Activated CD4-positive, alpha-beta T cell treated with anti-CD3 and anti-CD28 coated beads for 36 hours (primary cell): ENCODE measurements at regions of chr6 and their contacts with region 1.

Region 1: GRCh38 chr6:149746147-149746946 is at the start of gene NUP43:
- DNase-seq: peak; percentile 96
- ATAC-seq: peak; percentile 67
- H3K4me3 Mint-ChIP-seq: peak within 1 kb of the TSS; percentile 98
- H3K27ac Mint-ChIP-seq: peak within 1 kb of the TSS; percentile 96
- H3K4me1 Mint-ChIP-seq: peaks cover 27% of the 10 kb centered on the region
- H3K27me3 Mint-ChIP-seq: no peaks in the 10 kb centered on the region
- total RNA-seq, gene NUP43: 80.5 to 89.4 TPM

Region 2: GRCh38 chr6:149545754-149546528 is 200.4 kb before region 1 on chr6 and contains the start of gene PPIL4:
- CTCF ChIA-PET with region 1: no interaction called
- POLR2A ChIA-PET with region 1: no interaction called
- intact Hi-C with region 1: loop called in 1 of 2 experiments (anchors 1 kb)
- DNase-seq: peak; percentile 98
- ATAC-seq: peak; percentile 85
- H3K4me3 Mint-ChIP-seq: peak within 1 kb of the TSS; percentile 97
- H3K27ac Mint-ChIP-seq: peak within 1 kb of the TSS; percentile 98
- H3K4me1 Mint-ChIP-seq: peaks cover 42% of the 10 kb centered on the region
- H3K27me3 Mint-ChIP-seq: no peaks in the 10 kb centered on the region
- total RNA-seq, gene PPIL4: 22.6 to 26.8 TPM

Region 3: GRCh38 chr6:149648148-149649145 is 97.9 kb before region 1 on chr6 and contains the start of gene KATNA1:
- CTCF ChIA-PET with region 1: interaction called, 3 read pairs
- POLR2A ChIA-PET with region 1: no interaction called
- intact Hi-C with region 1: loop called (anchors 1 to 2 kb)
- DNase-seq: peak; percentile 95
- ATAC-seq: peak; percentile 96
- H3K4me3 Mint-ChIP-seq: peak within 1 kb of the TSS; percentile 90
- H3K27ac Mint-ChIP-seq: peak within 1 kb of the TSS; percentile 87
- H3K4me1 Mint-ChIP-seq: peaks cover 20% of the 10 kb centered on the region
- H3K27me3 Mint-ChIP-seq: no peaks in the 10 kb centered on the region
- total RNA-seq, gene KATNA1: 18.1 to 21.6 TPM

Region 4: DNA sequence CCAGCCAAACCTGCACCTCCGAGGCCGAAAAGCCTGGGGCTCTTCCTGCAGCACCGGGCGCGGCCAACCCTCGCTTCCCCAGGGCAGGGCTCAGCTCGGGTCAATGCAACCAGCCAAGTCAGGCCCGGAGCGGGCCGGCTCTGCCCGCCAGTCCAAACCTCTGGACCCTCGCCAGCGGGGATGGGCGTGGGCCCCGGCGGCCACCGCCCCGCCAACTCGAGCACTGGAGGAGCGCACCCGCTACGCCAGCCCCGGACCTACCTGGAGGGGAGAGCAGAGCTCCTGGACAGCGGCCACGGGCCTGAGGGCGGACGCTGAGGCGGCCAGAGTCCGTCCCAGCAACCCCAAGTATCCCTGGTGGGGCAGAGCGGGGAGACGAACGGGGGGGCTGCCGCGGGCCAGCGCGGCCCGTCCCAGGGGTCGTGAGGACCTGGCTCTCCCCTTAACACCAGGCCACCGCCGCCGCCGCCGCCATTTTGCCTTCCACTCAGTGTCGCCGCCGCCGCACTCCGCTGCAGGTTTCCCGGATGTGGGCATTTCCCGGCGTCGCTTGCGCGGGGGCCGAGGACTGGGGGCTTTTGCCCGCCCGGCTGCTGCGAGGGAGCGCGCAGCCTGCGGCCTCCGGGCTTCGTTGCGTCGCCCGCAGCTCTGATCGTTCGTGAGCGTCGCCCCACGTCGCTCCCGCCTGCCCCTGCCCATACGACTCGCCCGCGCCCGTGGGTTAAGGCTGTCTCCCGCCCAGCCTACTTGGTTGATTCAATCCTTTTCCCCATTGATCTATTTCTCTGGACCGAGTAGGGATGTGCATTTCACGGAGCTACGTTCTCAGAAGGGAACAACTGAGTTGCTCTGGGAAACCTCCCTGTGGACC is 28.5 kb before region 1 on chr6 and contains the start of gene LATS1:
- CTCF ChIA-PET with region 1: interaction called, 12 read pairs
- POLR2A ChIA-PET with region 1: interaction called, 7 read pairs
- intact Hi-C with region 1: loop called (anchors 1 kb)
- DNase-seq: peak; percentile 97
- ATAC-seq: peak; percentile 93
- H3K4me3 Mint-ChIP-seq: peak within 1 kb of the TSS; percentile 88
- H3K27ac Mint-ChIP-seq: peak within 1 kb of the TSS; percentile 98
- H3K4me1 Mint-ChIP-seq: peaks cover 25% of the 10 kb centered on the region
- H3K27me3 Mint-ChIP-seq: no peaks in the 10 kb centered on the region
- total RNA-seq, gene LATS1: 21.2 to 23.5 TPM

Region 5: GRCh38 chr6:149723771-149724417 is 22.5 kb before region 1 on chr6:
- CTCF ChIA-PET with region 1: interaction called, 12 read pairs
- POLR2A ChIA-PET with region 1: interaction called, 4 read pairs
- intact Hi-C with region 1: no loop called
- DNase-seq: peak; percentile 61
- ATAC-seq: peak; percentile 99
- H3K4me3 Mint-ChIP-seq: no peak overlapping the region
- H3K27ac Mint-ChIP-seq: peak overlapping the region; percentile 22
- H3K4me1 Mint-ChIP-seq: peaks cover 16% of the 10 kb centered on the region
- H3K27me3 Mint-ChIP-seq: no peaks in the 10 kb centered on the region

Region 6: GRCh38 chr6:149963462-149964307 is 217.3 kb after region 1 on chr6 and contains the start of gene ULBP1:
- CTCF ChIA-PET with region 1: interaction called, 3 read pairs
- POLR2A ChIA-PET with region 1: no interaction called
- intact Hi-C with region 1: loop called (anchors 5 kb)
- DNase-seq: peak; percentile 93
- ATAC-seq: peak; percentile 76
- H3K4me3 Mint-ChIP-seq: peak within 1 kb of the TSS; percentile 77
- H3K27ac Mint-ChIP-seq: peak within 1 kb of the TSS; percentile 91
- H3K4me1 Mint-ChIP-seq: peaks cover 22% of the 10 kb centered on the region
- H3K27me3 Mint-ChIP-seq: peaks cover 69% of the 10 kb centered on the region
- total RNA-seq, gene ULBP1: 2.7 to 5.0 TPM

Region 7: DNA sequence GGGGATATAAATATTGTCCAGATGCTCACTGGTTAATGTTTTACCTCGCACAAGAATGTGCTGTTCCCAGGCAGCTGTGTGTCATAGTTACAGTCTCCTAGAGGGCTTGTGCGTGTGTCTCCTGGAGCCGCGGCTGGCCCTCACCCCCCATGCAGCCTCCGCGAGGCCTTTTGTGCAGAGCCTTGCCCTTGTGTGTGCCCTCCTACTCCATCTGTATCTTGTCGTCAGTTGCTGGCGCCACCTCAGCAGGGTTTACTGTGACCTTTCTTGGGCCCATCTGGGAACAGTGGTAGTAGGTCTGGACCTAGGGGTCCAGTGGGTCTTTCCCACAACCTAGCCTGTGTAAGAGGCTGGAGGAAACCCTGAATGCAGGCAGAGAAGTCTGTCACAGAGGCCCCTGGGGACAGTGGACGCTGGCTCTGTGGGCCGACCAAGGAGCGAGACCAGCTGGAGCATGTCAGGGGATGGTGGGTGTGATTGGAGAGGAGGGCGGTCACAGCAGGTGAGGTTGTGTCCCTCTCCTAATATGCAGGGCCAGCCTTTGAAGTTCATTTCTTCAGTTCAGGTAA is 431.7 kb after region 1 on chr6:
- CTCF ChIA-PET with region 1: no interaction called
- POLR2A ChIA-PET with region 1: no interaction called
- intact Hi-C with region 1: no loop called
- DNase-seq: no peak
- ATAC-seq: no peak
- H3K4me3 Mint-ChIP-seq: no peak overlapping the region
- H3K27ac Mint-ChIP-seq: no peak overlapping the region
- H3K4me1 Mint-ChIP-seq: no peaks in the 10 kb centered on the region
- H3K27me3 Mint-ChIP-seq: peaks cover 6% of the 10 kb centered on the region

Region 8: DNA sequence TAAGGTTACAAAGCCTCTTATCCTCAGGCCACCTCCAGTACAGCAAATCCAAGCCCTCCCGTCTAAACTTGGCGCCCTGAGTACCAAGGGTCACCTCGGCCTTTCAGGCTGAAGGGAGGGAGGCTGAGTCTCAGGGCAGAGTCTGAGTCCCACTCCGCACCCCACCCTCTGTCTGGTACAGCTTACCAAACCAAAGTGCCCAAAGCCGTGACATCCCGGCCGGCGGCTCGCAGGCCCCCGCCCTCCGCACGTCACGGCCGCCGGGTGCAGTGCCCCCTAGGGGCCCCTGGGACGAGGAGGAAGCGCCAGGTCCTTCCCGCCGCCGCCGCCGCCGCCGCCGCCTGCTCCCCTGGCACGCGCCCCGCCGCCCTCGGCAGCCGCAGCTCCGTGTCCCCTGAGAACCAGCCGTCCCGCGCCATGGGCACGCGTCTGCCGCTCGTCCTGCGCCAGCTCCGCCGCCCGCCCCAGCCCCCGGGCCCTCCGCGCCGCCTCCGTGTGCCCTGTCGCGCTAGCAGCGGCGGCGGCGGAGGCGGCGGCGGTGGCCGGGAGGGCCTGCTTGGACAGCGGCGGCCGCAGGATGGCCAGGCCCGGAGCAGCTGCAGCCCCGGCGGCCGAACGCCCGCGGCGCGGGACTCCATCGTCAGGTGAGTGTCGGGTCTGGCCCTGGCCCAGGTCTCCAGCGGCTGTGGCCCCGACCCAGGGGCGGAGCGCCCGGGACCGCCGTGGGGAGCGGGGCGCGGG is 1119.2 kb after region 1 on chr6 and contains the start of gene MTHFD1L:
- CTCF ChIA-PET with region 1: no interaction called
- POLR2A ChIA-PET with region 1: no interaction called
- intact Hi-C with region 1: loop called in 1 of 2 experiments (anchors 5 kb)
- DNase-seq: peak; percentile 89
- ATAC-seq: peak; percentile 74
- H3K4me3 Mint-ChIP-seq: peak within 1 kb of the TSS; percentile 81
- H3K27ac Mint-ChIP-seq: peak within 1 kb of the TSS; percentile 94
- H3K4me1 Mint-ChIP-seq: peaks cover 38% of the 10 kb centered on the region
- H3K27me3 Mint-ChIP-seq: peaks cover 12% of the 10 kb centered on the region
- total RNA-seq, gene MTHFD1L: 103 to 129 TPM